ENCODE measurements at regions of chr22 and their contacts with region 1.

Region 1: GRCh38 chr22:50562523-50563412 is at the start of gene SYCE3:
- DNase-seq: peak; percentile 98

Region 2: DNA sequence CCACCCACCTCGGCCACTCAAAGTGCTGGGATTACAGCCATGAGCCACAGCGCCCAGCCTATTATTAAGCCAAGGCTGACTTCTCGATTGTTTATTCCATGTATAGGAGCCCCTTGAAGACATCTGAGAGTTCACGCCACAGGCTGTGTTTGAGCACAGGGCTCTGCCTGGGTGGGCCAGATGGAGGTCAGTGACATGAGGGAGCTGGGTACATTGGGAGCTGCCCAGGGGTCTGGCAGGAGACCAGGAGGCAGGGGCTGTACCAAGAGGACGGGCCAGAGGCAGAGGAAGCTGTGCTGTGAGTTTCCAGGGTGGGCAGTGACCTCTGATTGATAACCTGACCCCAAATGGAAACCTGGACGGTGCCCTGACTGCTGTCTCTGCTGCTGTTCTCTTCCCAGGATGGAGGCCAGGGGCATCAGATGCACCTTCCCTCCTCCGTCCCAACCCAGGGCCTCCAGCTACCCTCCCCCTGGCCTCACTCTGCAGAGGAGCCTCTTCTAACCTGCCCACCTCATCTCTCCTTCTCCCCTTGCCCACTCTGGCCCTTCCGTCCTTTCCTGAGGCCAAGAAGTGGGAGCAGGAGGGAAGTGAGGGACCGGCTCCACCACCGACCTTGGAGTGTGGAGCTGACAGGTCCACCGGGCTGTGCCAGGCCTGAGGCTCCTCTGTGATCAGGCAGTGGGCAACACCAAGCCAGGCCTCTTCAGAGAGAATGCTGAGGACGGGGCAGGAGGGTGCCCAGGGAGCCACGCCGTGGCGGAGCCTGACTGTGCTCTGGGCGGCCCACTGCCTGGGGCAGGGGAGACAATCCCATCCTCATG is 60.5 kb before region 1 on chr22:
- CTCF ChIA-PET with region 1: no interaction called
- POLR2A ChIA-PET with region 1: no interaction called
- DNase-seq: no peak

Region 3: GRCh38 chr22:50544078-50544745 is 18.6 kb before region 1 on chr22:
- CTCF ChIA-PET with region 1: interaction called, 12 read pairs
- POLR2A ChIA-PET with region 1: interaction called, 3 read pairs
- DNase-seq: peak; percentile 91

Region 4: GRCh38 chr22:50576070-50576469 is 13.3 kb after region 1 on chr22:
- CTCF ChIA-PET with region 1: interaction called, 5 read pairs
- POLR2A ChIA-PET with region 1: interaction called, 16 read pairs
- DNase-seq: peak; percentile 54

Region 5: DNA sequence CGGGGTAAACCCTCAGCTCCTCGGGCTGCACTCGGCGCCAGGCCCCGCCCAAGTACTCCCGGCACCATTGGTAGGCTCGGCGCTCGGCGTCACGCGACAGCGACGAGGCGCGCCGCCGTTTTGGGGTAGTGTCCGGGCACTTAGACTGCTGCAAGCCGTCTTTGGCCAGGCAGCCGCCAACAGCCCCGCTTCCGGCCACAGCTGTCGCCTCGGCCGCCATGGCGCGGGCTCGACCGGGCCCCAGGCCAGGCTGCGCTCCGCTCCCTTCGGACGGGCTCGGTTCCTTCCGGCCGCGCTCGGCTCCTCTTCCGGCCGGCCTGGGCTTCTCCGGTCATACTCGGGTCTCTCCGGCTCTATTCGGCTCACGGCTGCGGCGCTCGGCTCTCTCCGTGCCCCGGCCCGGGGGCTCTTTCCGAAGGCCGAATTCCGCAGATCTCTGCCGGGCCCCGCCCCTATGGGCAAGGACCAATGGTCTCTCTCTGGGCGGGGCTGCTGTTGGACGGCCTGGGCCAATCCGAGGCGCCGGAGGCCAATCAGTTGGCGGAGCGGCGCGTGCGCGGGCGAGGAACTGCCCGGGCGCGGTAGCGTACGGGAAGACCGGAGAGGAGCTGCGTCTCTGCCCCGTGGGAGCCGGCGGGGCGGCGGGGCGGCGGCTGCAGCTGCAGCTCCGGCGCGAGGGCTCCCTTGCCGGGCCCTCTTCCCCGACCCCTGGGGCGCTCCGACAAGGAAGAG is 20.0 kb after region 1 on chr22 and contains the start of gene CHKB:
- CTCF ChIA-PET with region 1: no interaction called
- POLR2A ChIA-PET with region 1: interaction called, 16 read pairs
- DNase-seq: peak; percentile 100

Region 6: DNA sequence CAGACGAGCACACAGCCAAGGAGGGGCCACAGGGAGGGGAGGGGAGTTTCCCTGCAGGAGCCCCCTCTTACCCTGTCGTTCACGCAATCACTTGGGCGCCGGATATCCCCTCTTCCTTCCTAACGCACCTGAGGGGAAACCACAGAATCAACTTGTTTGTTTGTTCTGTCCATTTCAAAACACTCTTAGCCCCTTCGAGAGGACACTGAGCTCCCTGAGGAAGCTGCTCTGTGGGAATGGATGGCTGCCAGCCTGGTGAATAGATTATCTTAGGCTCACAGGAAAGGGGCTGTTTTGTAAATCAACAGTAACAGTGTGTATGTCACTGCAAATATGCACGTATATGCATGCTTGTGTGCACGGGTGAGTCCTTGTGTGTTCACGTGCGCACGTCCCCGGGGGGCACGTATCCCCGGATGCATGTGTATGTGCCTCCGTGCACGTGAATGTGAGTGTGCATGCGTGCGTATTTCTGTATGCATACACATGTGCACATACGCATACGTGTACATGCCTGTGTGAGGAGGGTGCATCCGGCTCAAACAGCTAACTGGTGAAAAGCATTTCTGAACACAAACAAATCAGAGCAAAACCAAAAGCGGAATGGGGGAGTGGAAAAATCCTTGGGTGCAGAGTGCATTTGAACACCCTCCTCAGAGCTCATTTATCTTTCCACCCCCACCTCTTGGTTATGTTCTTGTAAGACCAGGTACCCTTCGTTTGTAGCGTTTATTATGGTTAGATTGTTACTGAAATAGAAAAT is 58.0 kb after region 1 on chr22:
- CTCF ChIA-PET with region 1: interaction called, 10 read pairs
- POLR2A ChIA-PET with region 1: interaction called, 3 read pairs
- DNase-seq: peak; percentile 77